ENCODE measurements at regions of chr6 and their contacts with region 1.

Region 1: DNA sequence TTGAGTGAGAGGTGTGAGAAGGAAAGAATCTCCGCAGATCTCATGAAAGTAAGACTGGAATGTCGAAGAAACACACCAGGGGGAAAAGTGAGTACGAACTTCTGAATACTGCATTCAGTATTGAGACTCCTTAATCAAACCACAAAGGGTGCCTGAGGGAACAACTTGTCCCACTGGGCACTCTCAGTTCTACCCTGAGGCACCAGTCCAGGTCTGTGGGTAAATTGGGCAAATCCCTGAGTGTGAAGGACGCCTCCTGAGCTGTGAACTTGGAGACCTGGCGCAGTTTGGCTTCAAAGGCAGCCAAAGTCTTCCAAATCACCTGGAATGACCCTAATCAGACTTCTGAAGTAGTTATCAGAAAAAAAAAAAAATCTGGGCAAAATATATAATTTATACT is 329.7 kb downstream of the BTBD9 start:
- DNase-seq: no peak
- H3K4me3 ChIP-seq: no peak overlapping the region
- H3K27ac ChIP-seq: no peak overlapping the region
- H3K4me1 ChIP-seq: peaks cover 0 to 9% of the 10 kb centered on the region in 2 donors
- H3K27me3 ChIP-seq: no peaks in the 10 kb centered on the region
- CTCF ChIP-seq: no peak
- POLR2A ChIP-seq: no peak

Region 2: DNA sequence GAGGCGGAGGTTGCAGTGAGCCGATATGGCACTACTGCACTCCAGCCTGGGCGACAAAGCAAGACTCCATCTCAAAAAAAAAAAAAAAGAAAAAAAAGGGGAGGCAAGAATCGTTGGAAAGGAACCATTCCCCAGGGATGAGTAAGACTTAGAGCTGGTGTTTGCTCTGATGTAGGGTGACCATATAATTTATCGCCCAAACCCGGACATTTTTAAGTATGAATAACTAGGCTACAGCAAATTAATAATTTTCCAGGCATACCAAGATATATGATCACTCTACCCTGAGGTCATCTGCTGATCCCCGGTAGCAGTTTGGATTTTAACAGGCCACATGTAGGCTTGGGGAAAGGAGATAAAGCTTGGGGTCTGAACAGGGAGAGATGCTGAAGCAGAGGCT is 68.7 kb after region 1 on chr6:
- intact Hi-C with region 1: loop called (anchors 5 kb)
- DNase-seq: no peak
- H3K4me3 ChIP-seq: no peak overlapping the region
- H3K27ac ChIP-seq: no peak overlapping the region
- H3K4me1 ChIP-seq: no peaks in the 10 kb centered on the region
- H3K27me3 ChIP-seq: no peaks in the 10 kb centered on the region
- CTCF ChIP-seq: no peak
- POLR2A ChIP-seq: no peak

Measured in breast epithelium (tissue), 4 donors.